A673 (cell line): ENCODE measurements at regions of chr15 and their contacts with region 1.

Region 1: DNA sequence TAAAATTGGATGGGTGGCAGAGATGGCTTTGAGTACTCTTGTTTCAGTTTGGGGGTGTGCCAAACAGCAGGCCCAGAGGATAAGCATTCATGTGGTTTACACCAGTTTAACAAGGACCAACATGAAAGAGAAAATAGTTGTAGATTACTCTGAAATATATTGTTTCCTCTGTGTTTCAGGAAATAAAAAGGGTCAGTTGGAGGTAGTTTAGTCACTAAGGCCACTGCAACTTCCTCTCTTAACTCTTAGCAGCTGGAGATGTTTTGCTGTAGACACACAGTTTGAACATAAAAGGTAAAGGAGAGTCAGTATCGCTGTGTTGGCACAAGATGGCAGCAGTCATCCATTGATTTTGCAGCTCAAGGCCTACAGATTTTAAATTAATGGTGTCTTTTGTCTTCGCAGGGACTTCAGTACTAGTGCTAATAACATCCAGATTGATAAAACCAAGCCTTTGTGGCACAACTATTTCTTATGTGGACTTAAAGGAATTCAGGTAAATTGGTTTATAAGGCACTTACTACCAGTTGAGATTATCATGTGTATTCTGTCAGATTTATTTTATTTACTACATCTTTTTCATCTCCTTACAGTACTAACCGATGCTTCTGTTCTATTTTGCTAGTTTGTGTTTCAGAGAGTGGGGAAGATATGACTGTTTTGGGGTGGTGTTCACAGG is 65.5 kb downstream of the GALK2 start:
- DNase-seq: peak; percentile 84
- H3K4me3 ChIP-seq: no peak overlapping the region
- H3K27ac ChIP-seq: no peak overlapping the region
- H3K4me1 ChIP-seq: peaks cover 33% of the 10 kb centered on the region
- H3K27me3 ChIP-seq: no peaks in the 10 kb centered on the region
- CTCF ChIP-seq: peak; percentile 83

Region 2: GRCh38 chr15:50003786-50004334 is 768.3 kb after region 1 on chr15:
- CTCF ChIA-PET with region 1: interaction called, 6 read pairs
- POLR2A ChIA-PET with region 1: no interaction called
- intact Hi-C with region 1: loop called (anchors 2 kb)
- DNase-seq: peak; percentile 77
- H3K4me3 ChIP-seq: no peak overlapping the region
- H3K27ac ChIP-seq: no peak overlapping the region
- H3K4me1 ChIP-seq: no peaks in the 10 kb centered on the region
- H3K27me3 ChIP-seq: peaks cover 4% of the 10 kb centered on the region
- CTCF ChIP-seq: peak; percentile 82

Region 3: DNA sequence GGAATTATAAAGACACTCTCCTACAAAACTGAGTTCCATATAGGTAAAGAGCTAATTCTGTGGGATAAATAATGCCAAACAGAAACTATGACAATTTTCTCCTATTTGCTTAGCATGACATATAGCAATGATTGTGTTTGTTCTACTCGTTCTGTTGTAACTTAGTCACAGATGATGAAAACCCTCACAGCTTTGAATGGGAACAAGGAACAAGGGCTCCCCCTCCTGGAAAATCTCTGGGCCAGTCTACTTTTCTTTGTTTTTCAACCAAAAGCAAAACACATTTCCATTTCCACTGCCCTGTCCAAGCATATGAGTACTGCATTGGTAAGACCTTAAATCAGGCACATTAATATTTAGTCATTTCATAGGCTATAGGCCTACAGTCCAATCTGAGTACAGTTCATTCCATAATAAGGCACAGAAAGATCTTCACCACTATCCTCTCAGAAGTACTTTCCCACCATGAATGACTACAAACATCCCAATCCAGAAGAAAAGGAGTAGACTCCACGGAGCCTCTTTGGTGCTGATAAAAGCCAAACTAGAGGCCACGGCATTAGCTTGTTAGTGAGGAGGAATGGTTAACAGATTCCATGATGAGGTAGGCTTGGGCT is 816.3 kb after region 1 on chr15:
- CTCF ChIA-PET with region 1: no interaction called
- POLR2A ChIA-PET with region 1: no interaction called
- intact Hi-C with region 1: loop called (anchors 5 kb)
- DNase-seq: peak; percentile 66
- H3K4me3 ChIP-seq: no peak overlapping the region
- H3K27ac ChIP-seq: no peak overlapping the region
- H3K4me1 ChIP-seq: no peaks in the 10 kb centered on the region
- H3K27me3 ChIP-seq: no peaks in the 10 kb centered on the region
- CTCF ChIP-seq: peak; percentile 72

Region 4: GRCh38 chr15:50145451-50145872 is 909.9 kb after region 1 on chr15:
- CTCF ChIA-PET with region 1: interaction called, 3 read pairs
- POLR2A ChIA-PET with region 1: no interaction called
- intact Hi-C with region 1: loop called (anchors 2 kb)
- DNase-seq: peak; percentile 86
- H3K4me3 ChIP-seq: no peak overlapping the region
- H3K27ac ChIP-seq: no peak overlapping the region
- H3K4me1 ChIP-seq: peaks cover 6% of the 10 kb centered on the region
- H3K27me3 ChIP-seq: no peaks in the 10 kb centered on the region
- CTCF ChIP-seq: peak; percentile 60

Region 5: DNA sequence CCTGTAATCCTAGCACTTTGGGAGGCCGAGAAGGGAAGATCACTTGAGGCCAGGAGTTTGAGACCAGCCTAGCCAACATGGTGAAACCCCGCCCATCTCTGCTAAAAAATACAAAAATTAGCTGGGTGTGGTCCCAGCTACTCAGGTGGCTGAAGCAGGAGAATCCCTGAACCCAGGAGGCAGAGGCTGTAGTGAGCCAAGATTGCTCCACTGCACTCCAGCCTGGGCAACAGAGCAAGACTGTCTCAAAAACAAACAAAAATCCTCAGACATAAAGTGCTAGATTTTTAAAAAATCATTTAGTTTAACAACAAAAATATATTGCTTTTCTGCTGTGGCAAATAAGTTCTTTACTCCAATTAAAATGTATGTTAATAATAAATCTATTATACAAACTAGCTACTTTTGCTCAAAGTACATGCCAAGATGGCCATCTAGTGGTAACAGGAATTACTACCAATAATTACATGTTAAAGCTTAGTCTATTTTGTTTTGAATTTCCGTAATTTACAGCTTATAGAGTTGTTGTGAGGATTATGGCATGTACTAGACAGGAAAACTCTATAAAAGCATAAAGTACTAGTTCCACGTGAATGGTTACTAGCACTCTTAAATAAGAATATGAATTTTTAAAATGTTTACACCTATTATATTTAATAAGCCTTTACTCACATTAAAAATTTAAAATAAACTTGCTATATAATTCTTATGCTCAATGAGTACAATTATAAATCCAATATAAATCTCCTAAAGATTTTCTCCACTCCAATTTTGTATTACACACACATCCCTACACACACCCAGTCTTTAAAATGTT is 1080.4 kb after region 1 on chr15:
- CTCF ChIA-PET with region 1: no interaction called
- POLR2A ChIA-PET with region 1: no interaction called
- intact Hi-C with region 1: loop called (anchors 10 kb)
- DNase-seq: peak; percentile 56
- H3K4me3 ChIP-seq: no peak overlapping the region
- H3K27ac ChIP-seq: no peak overlapping the region
- H3K4me1 ChIP-seq: peaks cover 10% of the 10 kb centered on the region
- H3K27me3 ChIP-seq: no peaks in the 10 kb centered on the region
- CTCF ChIP-seq: peak; percentile 78